AG04449 (cell line): ENCODE measurements at regions of chr16 and their contacts with region 1.

Region 1: GRCh38 chr16:56700195-56700594 is 17.9 kb downstream of the MT1X start:
- DNase-seq: no peak
- H3K4me3 ChIP-seq: no peak overlapping the region
- CTCF ChIP-seq: no peak

Region 2: DNA sequence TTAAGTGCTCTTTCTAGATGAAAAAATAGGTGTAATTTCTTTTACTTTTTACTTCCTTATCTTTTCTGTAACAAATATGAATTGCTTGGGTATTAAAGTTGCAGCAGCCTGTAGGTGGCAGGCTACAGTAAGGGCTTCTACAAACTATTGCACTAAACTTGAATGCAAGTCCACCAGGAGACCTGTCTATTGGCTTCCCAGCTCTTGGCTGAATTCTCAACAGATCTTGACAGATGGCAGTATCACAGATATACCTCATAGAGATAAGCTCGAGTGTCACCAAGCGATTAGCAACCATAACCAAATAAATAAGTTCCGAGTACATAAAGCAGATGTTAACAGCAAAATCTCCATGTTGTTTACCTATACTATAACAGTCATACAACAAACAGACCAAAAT is 186.2 kb before region 1 on chr16:
- CTCF ChIA-PET with region 1: interaction called, 60 read pairs
- POLR2A ChIA-PET with region 1: no interaction called
- DNase-seq: peak; percentile 16
- H3K4me3 ChIP-seq: no peak overlapping the region
- CTCF ChIP-seq: peak; percentile 58

Region 3: GRCh38 chr16:56576585-56577293 is 123.5 kb before region 1 on chr16:
- CTCF ChIA-PET with region 1: interaction called, 60 read pairs
- POLR2A ChIA-PET with region 1: no interaction called
- DNase-seq: no peak
- H3K4me3 ChIP-seq: no peak overlapping the region
- CTCF ChIP-seq: peak; percentile 76

Region 4: GRCh38 chr16:56608043-56608875 is 91.9 kb before region 1 on chr16 and contains the start of gene MT2A:
- CTCF ChIA-PET with region 1: interaction called, 174 read pairs
- POLR2A ChIA-PET with region 1: interaction called, 3 read pairs
- DNase-seq: peak; percentile 65
- H3K4me3 ChIP-seq: peak within 1 kb of the TSS; percentile 74
- CTCF ChIP-seq: no peak

Region 5: DNA sequence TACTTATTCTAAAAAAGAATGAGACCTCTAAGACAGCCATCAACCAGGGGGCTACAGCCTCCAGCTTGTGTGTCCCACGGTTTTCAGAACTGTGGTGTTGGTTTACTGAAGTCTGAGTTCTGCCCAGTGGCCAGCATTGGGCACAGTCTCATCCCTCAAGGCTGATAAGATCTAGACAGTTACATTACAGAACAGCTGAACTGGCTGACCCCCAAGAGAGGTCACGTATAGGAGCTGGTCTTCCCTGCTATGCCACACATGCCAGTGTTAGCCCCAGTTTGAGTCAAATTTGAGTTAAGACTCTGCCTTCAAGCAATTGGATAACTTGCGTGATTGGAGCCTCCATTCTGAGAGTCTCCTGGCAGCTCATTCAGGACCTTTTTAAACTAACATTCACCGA is 14.9 kb after region 1 on chr16:
- CTCF ChIA-PET with region 1: interaction called, 10 read pairs
- POLR2A ChIA-PET with region 1: no interaction called
- DNase-seq: no peak
- H3K4me3 ChIP-seq: no peak overlapping the region
- CTCF ChIP-seq: no peak

Region 6: DNA sequence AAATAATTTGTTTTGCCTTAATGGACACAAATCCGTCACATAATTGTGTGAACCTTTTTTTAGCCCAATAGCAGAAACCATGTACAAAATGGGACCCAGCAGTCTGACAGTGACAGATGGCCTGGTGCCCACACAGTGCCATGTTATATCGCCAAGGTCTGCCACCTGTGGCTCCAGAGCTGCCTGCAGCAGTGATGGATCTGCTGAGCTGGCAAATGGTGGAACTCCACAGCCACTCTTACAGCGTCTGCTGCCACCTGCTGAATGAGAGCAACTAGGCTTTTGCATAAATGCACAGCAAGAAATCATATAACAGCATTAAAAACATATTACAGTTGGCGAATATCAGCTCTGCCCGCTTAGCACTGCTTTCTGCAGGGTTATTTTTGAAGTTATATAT is 89.2 kb after region 1 on chr16:
- CTCF ChIA-PET with region 1: interaction called, 11 read pairs
- POLR2A ChIA-PET with region 1: no interaction called
- DNase-seq: no peak
- H3K4me3 ChIP-seq: no peak overlapping the region
- CTCF ChIP-seq: peak; percentile 50